ENCODE measurements at regions of chr12 and their contacts with region 1.

Region 1: GRCh38 chr12:124490584-124491308 is 76.7 kb downstream of the NCOR2 start:
- DNase-seq: no peak
- H3K4me3 ChIP-seq: no peak overlapping the region
- H3K27ac ChIP-seq: no peak overlapping the region
- H3K4me1 ChIP-seq: no peaks in the 10 kb centered on the region
- H3K27me3 ChIP-seq: no peaks in the 10 kb centered on the region
- CTCF ChIP-seq: no peak

Region 2: DNA sequence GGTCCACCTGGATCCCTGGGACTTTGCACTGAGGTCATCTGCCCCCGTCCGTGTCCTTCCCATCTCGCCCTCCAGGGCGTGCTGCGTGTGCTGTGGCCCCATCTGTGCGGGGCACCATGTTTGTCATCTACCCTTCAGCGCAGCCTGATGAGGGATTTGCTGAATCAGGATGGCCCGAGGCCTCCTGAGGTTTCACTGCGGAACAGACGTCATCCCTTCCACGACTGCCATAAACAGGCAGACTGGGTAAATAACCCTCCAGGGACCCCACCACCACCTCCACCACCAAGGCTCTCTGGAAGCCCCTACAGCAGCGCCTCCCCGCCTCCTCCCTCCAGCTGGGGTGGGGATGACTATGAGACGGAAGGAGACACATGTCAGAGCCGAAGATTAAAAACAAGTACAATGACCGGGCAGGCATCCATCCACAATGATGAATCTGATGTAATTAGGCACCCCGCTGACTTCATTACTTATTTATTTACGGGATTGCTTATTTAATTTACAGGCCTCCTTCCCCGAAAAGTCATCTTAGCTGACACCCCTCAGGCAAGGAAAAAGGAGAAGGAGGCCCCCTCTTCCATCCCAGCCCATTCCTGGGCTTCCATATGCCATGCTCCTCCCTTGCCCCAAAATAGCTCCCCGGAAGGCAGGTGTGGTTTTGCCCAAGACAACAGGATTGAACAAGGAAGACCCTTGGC is 37.3 kb after region 1 on chr12:
- CTCF ChIA-PET with region 1: no interaction called
- POLR2A ChIA-PET with region 1: no interaction called
- intact Hi-C with region 1: loop called (anchors 2 kb)
- DNase-seq: peak; percentile 98
- H3K4me3 ChIP-seq: peak overlapping the region; percentile 7
- H3K27ac ChIP-seq: peak overlapping the region; percentile 93
- H3K4me1 ChIP-seq: peaks cover 56% of the 10 kb centered on the region
- H3K27me3 ChIP-seq: no peaks in the 10 kb centered on the region
- CTCF ChIP-seq: 0 out of 2 replicates have a peak, but pooled peaks have one; percentile 24

Region 3: DNA sequence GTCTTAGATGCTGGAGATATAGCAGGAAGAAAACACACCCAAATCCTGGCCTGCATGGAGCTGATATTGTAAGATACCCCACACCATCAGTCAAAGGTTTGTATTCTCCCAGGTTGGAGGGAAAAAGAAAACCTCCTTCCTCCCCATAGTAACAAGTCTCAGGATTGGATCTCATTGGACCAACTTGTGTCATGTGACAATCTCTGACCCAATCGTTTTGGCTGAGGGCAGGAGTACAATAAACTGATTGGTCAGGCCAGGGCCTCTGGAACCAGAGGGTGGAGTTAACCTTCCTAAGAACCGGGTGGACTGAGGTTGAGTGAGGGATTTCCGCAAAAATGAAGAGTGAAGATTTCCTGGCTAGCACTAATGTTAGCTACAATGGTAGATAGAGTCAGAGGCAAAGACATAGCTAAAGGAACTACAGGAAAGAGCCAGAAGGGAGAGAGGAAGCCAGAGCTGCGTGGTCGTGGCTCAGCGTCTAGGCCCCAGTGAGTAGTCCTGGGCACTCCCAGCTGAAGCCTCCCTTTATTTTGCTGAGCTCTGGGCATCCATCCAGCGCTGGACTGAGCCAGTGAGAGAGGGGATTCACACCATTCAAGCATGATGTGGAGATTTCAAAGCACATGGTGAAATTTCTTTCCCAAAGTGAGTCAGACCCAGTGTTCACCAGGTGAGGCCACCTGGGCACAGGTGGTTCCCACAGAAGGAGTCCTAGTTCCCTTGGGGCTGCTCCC is 794.4 kb after region 1 on chr12:
- CTCF ChIA-PET with region 1: no interaction called
- POLR2A ChIA-PET with region 1: no interaction called
- intact Hi-C with region 1: no loop called
- DNase-seq: no peak
- H3K4me3 ChIP-seq: no peak overlapping the region
- H3K27ac ChIP-seq: no peak overlapping the region
- H3K4me1 ChIP-seq: no peaks in the 10 kb centered on the region
- H3K27me3 ChIP-seq: peaks cover 20% of the 10 kb centered on the region
- CTCF ChIP-seq: no peak

Measured in A673 (cell line).